ENCODE measurements at regions of chr16 and their contacts with region 1.

Region 1: DNA sequence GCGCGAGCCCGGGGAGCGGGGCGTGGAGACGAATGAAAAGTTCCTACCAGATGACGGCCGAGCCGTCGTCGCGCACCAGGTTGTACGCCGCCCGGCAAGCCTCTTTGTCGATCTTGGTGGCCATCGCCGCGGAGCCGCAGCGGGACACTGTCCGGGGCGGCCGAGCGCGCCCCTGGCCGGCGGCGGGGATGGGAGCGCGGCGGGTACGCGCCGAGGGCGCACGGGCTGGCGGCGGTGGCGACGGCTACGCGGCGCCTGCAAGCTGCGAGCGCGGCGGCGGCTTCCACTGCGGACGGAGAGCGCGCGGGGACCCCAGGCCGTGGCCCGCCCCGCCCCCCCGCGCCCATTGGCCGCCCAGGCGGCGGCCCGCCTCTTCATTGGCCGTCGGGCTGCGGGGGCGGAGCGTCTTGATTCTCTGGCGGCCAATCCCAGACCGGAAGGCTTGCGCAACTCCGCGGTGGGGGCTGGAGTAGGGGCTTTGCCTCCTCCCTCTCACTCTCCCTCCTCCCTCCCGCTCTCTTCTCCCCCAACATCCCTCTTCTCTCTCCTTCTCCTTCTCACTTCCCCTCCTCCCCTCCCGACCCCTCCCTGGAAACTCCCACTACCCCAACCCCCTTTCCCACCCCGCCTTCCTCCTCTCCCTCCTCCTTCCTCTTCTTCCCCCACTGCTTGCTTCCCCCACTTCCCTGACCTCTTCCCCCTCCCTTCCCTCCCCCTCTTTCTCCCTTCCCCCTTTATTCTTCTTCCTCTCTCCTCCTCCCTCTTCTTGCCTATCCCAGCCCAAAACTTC is at the start of gene COTL1:
- DNase-seq: peak; percentile 97
- H3K4me3 ChIP-seq: peak within 1 kb of the TSS; percentile 87
- H3K27ac ChIP-seq: peak within 1 kb of the TSS; percentile 96
- H3K27me3 ChIP-seq: no peaks in the 10 kb centered on the region
- CTCF ChIP-seq: no peak
- polyA plus RNA-seq, gene COTL1: 153 and 197 TPM in 2 replicates

Region 2: DNA sequence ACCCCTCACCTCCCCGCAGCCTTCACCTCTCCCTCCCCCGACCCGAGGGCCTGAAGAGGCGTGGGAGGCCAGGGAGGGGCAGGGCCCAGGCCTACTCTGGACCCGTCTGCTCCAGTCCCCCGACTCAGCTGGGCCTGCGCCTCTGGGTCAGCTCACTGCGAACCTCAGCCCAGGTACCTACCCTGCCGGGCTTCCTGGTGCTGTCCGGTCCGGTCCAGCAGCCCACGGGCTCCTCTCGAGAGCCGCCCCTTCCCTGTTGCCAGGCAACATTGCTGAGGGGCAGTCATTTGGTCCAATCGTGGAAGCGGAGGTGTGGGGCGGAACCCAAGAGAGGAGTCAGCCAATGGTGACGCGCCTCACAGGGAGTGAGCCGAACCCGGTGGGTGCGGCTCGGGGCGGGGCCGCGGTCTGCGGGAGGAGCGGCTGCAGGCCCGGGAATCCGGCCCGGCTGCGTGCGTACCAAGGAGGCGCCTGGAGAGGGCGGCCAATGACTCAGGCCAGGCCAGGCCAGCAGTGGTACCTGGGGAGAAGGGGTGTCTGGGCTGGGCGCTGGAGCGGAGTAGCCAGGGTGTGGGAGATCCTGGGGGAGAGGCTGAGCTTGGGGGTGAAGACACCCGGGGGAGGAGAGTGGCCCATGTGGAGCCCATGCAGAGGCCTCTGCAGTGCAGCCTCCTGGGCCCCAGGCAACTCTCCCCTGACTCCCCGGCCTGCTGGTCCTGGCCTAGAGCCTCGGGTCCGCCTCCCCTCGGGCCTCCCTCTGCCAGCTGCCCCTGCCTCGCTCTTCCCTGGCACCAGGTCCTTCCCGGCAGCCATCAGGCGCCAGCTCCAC is 113.4 kb before region 1 on chr16 and contains the start of gene MEAK7:
- CTCF ChIA-PET with region 1: interaction called, 124 read pairs
- POLR2A ChIA-PET with region 1: interaction called, 5 read pairs
- DNase-seq: peak; percentile 95
- H3K4me3 ChIP-seq: peak within 1 kb of the TSS; percentile 99
- H3K27ac ChIP-seq: peak within 1 kb of the TSS; percentile 84
- H3K27me3 ChIP-seq: no peaks in the 10 kb centered on the region
- CTCF ChIP-seq: 0 out of 2 replicates have a peak, but pooled peaks have one; percentile 18
- polyA plus RNA-seq, gene MEAK7: 22.8 and 26.2 TPM in 2 replicates

Region 3: GRCh38 chr16:84599521-84600202 is 18.3 kb before region 1 on chr16:
- CTCF ChIA-PET with region 1: interaction called, 10 read pairs
- POLR2A ChIA-PET with region 1: interaction called, 13 read pairs
- DNase-seq: peak; percentile 45
- H3K4me3 ChIP-seq: peak overlapping the region; percentile 46
- H3K27ac ChIP-seq: peak overlapping the region; percentile 95
- H3K27me3 ChIP-seq: no peaks in the 10 kb centered on the region
- CTCF ChIP-seq: no peak

Region 4: DNA sequence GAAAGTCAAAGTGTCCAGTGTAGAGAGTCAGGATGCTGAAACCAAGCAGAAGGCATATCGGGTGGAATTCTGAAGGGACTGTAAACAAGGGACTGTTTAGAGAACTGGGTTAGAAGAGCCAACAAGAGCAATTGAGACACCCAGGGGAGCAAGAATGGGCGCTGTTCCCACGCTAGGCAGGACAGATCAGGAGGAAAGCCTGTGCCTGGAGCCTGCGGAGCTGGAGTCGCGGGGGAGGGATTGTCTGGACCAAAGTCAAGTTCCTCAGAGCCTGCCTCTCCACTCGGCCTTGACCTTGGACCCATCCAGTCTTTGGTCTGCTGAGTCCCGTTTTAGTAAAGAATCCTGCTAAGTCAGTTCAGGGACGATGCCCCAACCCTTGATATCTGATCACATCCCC is 15.6 kb after region 1 on chr16:
- CTCF ChIA-PET with region 1: interaction called, 12 read pairs
- POLR2A ChIA-PET with region 1: no interaction called
- DNase-seq: no peak
- H3K4me3 ChIP-seq: no peak overlapping the region
- H3K27ac ChIP-seq: no peak overlapping the region
- H3K27me3 ChIP-seq: no peaks in the 10 kb centered on the region
- CTCF ChIP-seq: no peak

Region 5: GRCh38 chr16:84738255-84739038 is 120.5 kb after region 1 on chr16:
- CTCF ChIA-PET with region 1: interaction called, 31 read pairs
- POLR2A ChIA-PET with region 1: interaction called, 5 read pairs
- DNase-seq: peak; percentile 26
- H3K4me3 ChIP-seq: no peak overlapping the region
- H3K27ac ChIP-seq: no peak overlapping the region
- H3K27me3 ChIP-seq: no peaks in the 10 kb centered on the region
- CTCF ChIP-seq: peak; percentile 84